ENCODE measurements at regions of chr12 and their contacts with region 1.

Region 1: GRCh38 chr12:52495389-52495788 is 2.3 kb upstream of the KRT6A start:
- DNase-seq: no peak
- ATAC-seq: peak in 1 of 4 donors; percentile 47
- H3K4me3 ChIP-seq: no peak overlapping the region
- H3K27ac ChIP-seq: no peak overlapping the region
- H3K4me1 ChIP-seq: no peaks in the 10 kb centered on the region
- H3K27me3 ChIP-seq: no peaks in the 10 kb centered on the region
- CTCF ChIP-seq: no peak

Region 2: DNA sequence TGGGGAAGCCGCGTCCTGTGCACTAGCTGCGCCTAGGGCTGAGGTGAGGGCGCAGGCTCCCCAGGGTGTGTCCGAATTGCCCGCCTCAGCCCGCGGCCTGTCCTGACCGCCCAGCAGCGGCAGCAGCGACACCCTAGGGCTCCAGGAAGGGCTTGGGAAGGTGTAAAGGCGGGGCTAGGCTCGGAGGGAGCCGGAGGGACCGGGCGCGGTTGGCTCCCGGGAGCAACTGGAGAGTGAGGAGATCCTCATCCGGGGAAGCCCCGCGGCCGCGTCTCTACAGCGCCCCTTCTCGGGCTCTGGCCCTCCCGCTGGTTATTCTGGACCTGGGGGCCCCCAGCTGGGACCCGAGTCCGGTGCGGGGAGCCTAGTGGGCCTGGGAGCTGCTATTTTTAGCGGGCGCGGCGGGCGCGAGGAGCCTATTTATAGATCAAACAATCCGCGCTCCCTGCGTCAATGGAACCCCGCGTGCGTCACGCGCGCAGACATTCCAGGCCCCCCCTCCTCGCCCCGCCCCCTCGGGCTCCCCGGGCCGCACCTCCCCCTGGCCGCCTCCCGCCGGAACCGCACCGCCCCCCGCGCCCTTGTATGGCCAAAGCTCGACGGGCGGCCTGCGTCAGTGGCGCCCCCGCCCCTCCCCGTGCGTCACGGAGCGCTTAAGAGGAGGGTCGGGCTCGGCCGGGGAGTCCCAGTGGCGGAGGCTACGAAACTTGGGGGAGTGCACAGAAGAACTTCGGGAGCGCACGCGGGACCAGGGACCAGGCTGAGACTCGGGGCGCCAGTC is 444.4 kb before region 1 on chr12 and contains the start of gene NR4A1:
- intact Hi-C with region 1: no loop called
- DNase-seq: peak; percentile 95 to 99 (median 97)
- ATAC-seq: peak; percentile 66 to 89 (median 84)
- H3K4me3 ChIP-seq: peak within 1 kb of the TSS; percentile 16 to 52 (median 40)
- H3K27ac ChIP-seq: peak within 1 kb of the TSS; percentile 93 to 100 (median 98)
- H3K4me1 ChIP-seq: peaks cover 13 to 20% (median 18%) of the 10 kb centered on the region in 3 donors
- H3K27me3 ChIP-seq: no peaks in the 10 kb centered on the region
- CTCF ChIP-seq: no peak
- total RNA-seq, gene NR4A1: 11.7 to 55.2 (median 22.0) TPM

Region 3: DNA sequence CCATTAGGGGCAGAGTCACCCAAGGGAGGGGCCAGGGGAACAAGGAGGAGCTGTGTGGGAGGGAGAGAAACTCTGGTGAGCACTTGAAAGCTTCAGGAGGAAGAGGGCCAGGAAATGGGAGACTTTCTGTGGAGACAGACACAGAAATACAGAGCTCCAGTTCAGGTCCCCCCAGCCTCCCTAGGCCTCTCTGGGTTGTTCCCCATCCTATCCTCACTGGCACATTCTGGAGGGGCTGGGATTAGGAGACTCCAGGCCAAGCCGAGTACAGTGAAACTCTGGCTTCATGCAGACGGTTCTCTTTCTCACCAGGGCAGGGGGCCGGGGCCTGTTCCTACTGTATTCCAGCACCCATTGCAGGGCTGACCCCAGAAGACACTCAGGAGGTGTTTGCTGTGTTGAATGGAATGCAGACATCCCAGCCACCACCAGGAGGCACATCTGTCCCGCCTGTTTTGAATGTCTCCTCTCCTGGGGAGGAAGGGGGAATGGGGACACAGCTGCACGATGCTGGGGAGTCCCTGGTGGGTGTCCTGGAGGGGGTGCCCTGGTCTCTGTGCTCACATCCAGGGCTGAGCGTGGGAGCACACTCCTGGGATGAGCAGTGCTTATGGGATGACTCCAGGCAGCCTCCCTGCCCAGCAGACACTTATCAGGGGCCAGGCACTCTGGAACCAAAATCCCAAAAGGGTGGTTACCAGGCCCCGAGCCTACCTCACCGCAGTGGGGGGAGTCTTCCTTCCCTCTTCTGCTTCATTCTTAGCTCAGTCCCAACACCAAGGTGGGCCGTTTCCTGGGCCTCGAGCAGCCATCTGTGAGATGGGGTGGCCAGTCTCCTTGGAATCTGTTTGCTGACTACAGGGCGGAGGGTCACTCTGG is 104.4 kb before region 1 on chr12:
- intact Hi-C with region 1: loop called in 1 of 3 experiments (anchors 10 kb)
- DNase-seq: no peak
- ATAC-seq: peak in 3 of 4 donors; percentile 25 to 57 (median 52)
- H3K4me3 ChIP-seq: no peak overlapping the region
- H3K27ac ChIP-seq: no peak overlapping the region
- H3K4me1 ChIP-seq: no peaks in the 10 kb centered on the region
- H3K27me3 ChIP-seq: no peaks in the 10 kb centered on the region
- CTCF ChIP-seq: no peak

Region 4: GRCh38 chr12:52715416-52715815 is 220.0 kb after region 1 on chr12:
- intact Hi-C with region 1: no loop called
- DNase-seq: no peak
- ATAC-seq: peak in 1 of 4 donors; percentile 59
- H3K4me3 ChIP-seq: no peak overlapping the region
- H3K27ac ChIP-seq: no peak overlapping the region
- H3K4me1 ChIP-seq: no peaks in the 10 kb centered on the region
- H3K27me3 ChIP-seq: peaks cover 0 to 21% (median 6%) of the 10 kb centered on the region in 4 donors
- CTCF ChIP-seq: no peak

Measured in pancreas (tissue), 10 donors.